Activated naive CD4-positive, alpha-beta T cell treated with anti-CD3 and anti-CD28 coated beads, Interleukin-2, amount 10 ng/mL, durations not matched to agents 7 days and 5 days (primary cell): ENCODE measurements at regions of chr2 and their contacts with region 1.

Region 1: GRCh38 chr2:172465417-172466334 is 38.3 kb downstream of the ITGA6 start:
- DNase-seq: peak; percentile 83
- H3K4me3 Mint-ChIP-seq: no peak overlapping the region
- H3K27ac Mint-ChIP-seq: peak overlapping the region; percentile 96
- H3K4me1 Mint-ChIP-seq: peaks cover 59% of the 10 kb centered on the region
- H3K27me3 Mint-ChIP-seq: no peaks in the 10 kb centered on the region

Region 2: GRCh38 chr2:172102391-172103278 is 363.0 kb before region 1 on chr2 and contains the start of gene DLX2:
- CTCF ChIA-PET with region 1: interaction called, 10 read pairs
- DNase-seq: peak; percentile 81
- H3K4me3 Mint-ChIP-seq: peak within 1 kb of the TSS; percentile 75
- H3K27ac Mint-ChIP-seq: peak within 1 kb of the TSS; percentile 77
- H3K4me1 Mint-ChIP-seq: peaks cover 58% of the 10 kb centered on the region
- H3K27me3 Mint-ChIP-seq: peaks cover 99% of the 10 kb centered on the region

Region 3: GRCh38 chr2:172179045-172179701 is 286.5 kb before region 1 on chr2:
- CTCF ChIA-PET with region 1: interaction called, 63 read pairs
- DNase-seq: peak; percentile 34
- H3K4me3 Mint-ChIP-seq: no peak overlapping the region
- H3K27ac Mint-ChIP-seq: no peak overlapping the region
- H3K4me1 Mint-ChIP-seq: peaks cover 33% of the 10 kb centered on the region
- H3K27me3 Mint-ChIP-seq: peaks cover 9% of the 10 kb centered on the region

Region 4: DNA sequence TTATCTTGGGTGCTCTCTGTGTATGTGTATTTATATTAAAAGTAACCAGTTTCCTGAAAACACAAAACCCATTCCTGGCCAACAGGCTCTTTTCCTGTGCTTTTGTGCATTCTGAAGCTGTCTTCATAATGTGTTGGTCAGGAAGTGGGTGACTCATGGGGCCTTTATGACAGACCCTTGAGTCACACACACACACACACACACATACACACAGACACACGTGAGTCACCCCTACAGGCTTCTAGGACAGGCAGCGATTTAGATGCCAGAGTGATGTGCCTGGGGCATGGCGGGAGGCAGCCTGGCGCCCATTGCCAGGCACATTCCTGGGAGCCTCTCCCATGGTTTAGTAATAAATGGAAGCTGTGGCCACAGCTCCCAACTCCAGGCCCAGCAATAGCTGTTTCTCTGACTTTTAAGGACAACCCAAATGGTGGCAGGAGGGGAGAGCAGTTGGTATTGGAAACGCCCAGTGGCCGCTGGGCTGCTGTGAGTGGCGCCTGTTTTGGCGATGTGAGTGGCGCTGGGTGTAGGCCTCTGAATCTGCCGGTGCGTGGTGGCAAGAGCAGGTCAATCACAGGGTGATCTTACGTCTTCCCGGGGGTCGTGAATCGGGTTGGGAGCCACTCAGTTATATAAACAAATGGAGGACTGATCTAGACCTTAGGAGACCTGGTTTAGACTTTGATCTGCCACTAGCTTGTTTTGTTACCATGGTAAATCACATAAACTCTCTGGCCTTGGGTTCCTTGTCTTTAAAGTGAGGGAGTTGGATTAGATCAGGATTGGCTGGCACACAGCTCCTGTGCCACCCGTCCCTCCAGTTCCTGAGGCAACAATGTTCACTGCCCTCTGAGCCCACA is 212.3 kb before region 1 on chr2:
- CTCF ChIA-PET with region 1: interaction called, 18 read pairs
- DNase-seq: peak; percentile 45
- H3K4me3 Mint-ChIP-seq: no peak overlapping the region
- H3K27ac Mint-ChIP-seq: peak overlapping the region; percentile 84
- H3K4me1 Mint-ChIP-seq: peaks cover 43% of the 10 kb centered on the region
- H3K27me3 Mint-ChIP-seq: peaks cover 10% of the 10 kb centered on the region

Region 5: DNA sequence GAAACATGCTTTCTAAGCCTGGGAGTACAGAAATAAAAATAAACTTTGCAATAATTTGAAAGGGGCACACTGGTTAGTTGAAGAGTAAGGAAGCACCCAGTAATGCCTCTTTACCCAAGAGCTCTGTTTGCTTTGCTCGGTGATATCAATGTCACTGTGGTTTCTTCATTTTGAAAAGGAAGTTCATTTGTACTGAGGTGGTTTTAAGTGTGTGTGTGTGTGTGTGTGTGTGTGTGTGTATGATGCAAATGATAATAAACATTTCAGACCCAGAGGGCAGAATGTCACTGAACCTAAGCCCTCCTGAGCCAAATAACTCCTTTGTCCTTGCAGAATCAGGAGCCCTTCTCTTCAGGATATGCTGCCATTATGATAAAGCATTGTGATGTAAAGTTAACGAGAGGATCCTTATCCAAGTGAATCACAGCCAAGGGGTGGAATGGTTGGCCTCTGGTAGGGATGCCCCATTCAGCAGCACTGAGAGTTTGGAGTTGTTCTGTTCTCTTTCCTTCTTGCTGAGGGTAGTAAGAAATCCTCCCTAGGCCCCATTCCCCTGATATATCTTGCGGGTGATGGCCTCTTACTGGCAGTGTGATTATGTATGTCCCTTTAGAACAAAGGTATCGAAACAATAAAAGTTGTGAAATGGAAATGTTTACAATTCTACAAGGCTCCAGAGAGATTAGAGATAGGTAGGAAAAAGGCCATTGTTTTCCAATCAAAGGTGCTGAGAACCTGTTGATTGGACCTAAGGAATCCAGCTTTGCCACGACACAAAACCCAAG is 30.7 kb before region 1 on chr2:
- CTCF ChIA-PET with region 1: interaction called, 128 read pairs
- DNase-seq: peak; percentile 65
- H3K4me3 Mint-ChIP-seq: peak overlapping the region; percentile 3
- H3K27ac Mint-ChIP-seq: peak overlapping the region; percentile 70
- H3K4me1 Mint-ChIP-seq: no peaks in the 10 kb centered on the region
- H3K27me3 Mint-ChIP-seq: peaks cover 3% of the 10 kb centered on the region

Region 6: DNA sequence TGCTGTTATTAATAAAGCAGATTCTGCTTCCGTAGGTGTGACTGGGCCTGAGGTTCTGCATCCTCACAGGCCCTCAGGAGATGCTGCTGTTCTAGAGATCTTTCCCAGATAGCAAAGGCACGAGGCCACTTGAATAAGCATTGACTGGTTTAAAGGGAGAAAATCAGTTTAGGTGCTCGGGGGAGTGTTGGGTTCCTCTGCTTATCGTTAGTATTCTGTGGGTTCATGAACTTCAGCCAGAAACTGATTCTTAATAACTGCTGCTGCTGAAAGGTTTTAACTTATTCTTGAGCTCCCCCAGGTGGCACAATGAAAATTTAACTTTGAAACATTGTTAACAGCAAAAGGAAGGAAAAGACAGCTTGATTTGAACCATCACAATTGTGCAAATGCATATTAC is 18.6 kb after region 1 on chr2:
- CTCF ChIA-PET with region 1: interaction called, 22 read pairs
- DNase-seq: no peak
- H3K4me3 Mint-ChIP-seq: no peak overlapping the region
- H3K27ac Mint-ChIP-seq: peak overlapping the region; percentile 1
- H3K4me1 Mint-ChIP-seq: peaks cover 37% of the 10 kb centered on the region
- H3K27me3 Mint-ChIP-seq: no peaks in the 10 kb centered on the region